SK-N-SH (cell line): ENCODE measurements at regions of chr10 and their contacts with region 1.

Region 1: GRCh38 chr10:14837757-14838581 is at the starts of genes CDNF, HSPA14 and MSANTD7:
- DNase-seq: peak; percentile 97
- H3K4me3 ChIP-seq: peak within 1 kb of the TSS; percentile 93 to 99
- H3K27ac ChIP-seq: peak within 1 kb of the TSS; percentile 81 to 93
- H3K4me1 ChIP-seq: peaks cover 0 to 7% of the 10 kb centered on the region in 2 experiments; a peak in 1 of 4 replicates
- H3K27me3 ChIP-seq: no peaks in the 10 kb centered on the region
- CTCF ChIP-seq: no peak
- EP300 ChIP-seq: no peak
- RAD21 ChIP-seq: no peak
- polyA plus RNA-seq, gene CDNF: 1.0 and 1.2 TPM in 2 replicates
- polyA plus RNA-seq, gene HSPA14: 8.8 and 10.8 TPM in 2 replicates
- polyA plus RNA-seq, gene MSANTD7: 3.2 and 3.9 TPM in 2 replicates

Region 2: DNA sequence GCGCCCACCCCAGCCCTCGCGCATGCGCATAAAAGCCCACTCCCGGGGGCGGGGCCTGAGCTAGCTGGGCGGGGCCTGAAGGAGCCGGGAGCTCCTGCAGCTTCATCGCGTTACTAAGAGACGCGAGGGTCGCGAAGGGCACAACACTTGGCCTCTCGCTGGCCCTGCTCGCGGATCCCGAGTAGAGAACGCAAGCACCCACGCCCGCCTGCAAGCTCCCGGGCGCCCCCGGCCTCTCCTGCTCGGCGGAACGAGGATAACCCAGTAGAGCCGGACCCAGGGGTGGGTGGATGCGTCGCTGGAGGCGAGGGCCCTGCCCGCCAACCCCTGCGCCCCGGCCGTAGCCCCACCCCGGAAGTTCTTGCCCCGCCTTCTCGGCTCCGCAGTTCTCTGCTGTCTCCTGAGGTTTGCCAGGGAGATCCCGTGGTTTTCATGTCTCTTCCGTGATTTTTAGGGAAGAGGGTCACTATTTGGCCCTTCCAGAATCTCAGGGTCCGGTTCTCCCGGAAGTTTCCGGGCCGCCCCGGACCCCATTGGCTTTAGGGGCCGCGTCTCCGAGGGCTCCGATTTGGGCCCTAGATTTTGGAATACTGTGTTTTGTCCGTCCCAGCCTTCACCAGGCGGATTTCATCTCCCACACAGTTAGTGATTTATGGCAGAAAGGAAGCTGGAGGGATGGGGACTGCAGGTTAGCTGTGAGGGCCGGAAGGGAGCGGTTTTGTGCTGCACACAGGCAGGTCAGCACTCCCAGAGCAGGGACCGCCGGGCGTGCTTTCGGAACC is 121.5 kb after region 1 on chr10 and contains the start of gene MEIG1:
- CTCF ChIA-PET with region 1: no interaction called
- POLR2A ChIA-PET with region 1: interaction called, 12 read pairs
- DNase-seq: peak; percentile 95
- H3K4me3 ChIP-seq: peak within 1 kb of the TSS; percentile 62 to 82
- H3K27ac ChIP-seq: peak within 1 kb of the TSS; percentile 96 to 98
- H3K4me1 ChIP-seq: peaks cover 3 to 7% of the 10 kb centered on the region in 2 experiments; a peak in 2 of 4 replicates
- H3K27me3 ChIP-seq: no peaks in the 10 kb centered on the region
- CTCF ChIP-seq: no peak
- EP300 ChIP-seq: 0 out of 4 replicates have a peak, but pooled peaks of 1 of the 2 experiments have one; percentile 10
- RAD21 ChIP-seq: no peak
- polyA plus RNA-seq, gene MEIG1: 0.42 and 0.43 TPM in 2 replicates